B cell (primary cell): ENCODE measurements at regions of chr11 and their contacts with region 1.

Region 1: GRCh38 chr11:126303623-126304456 is at the start of gene DCPS:
- DNase-seq: peak; percentile 89
- ATAC-seq: peak; percentile 98
- H3K4me3 ChIP-seq: peak within 1 kb of the TSS; percentile 60 to 99 (median 97)
- H3K4me3 Mint-ChIP-seq: peak within 1 kb of the TSS; percentile 88
- H3K27ac ChIP-seq: peak within 1 kb of the TSS; percentile 82 to 90
- H3K27ac Mint-ChIP-seq: peak within 1 kb of the TSS; percentile 94
- H3K4me1 ChIP-seq: peaks cover 11 to 33% of the 10 kb centered on the region in 2 donors
- H3K4me1 Mint-ChIP-seq: peaks cover 35% of the 10 kb centered on the region
- H3K27me3 ChIP-seq: no peaks in the 10 kb centered on the region
- H3K27me3 Mint-ChIP-seq: no peaks in the 10 kb centered on the region
- CTCF ChIP-seq: no peak
- total RNA-seq, gene DCPS: 21.7 and 24.5 TPM in 2 replicates

Region 2: GRCh38 chr11:126282736-126283591 is 20.9 kb before region 1 on chr11 and contains the start of gene TIRAP:
- CTCF ChIA-PET with region 1: interaction called, 3 read pairs
- POLR2A ChIA-PET with region 1: interaction called, 12 read pairs
- intact Hi-C with region 1: loop called (anchors 1 kb)
- DNase-seq: peak; percentile 77
- ATAC-seq: peak; percentile 77
- H3K4me3 ChIP-seq: peak within 1 kb of the TSS; percentile 56 to 87 (median 73)
- H3K4me3 Mint-ChIP-seq: peak within 1 kb of the TSS; percentile 100
- H3K27ac ChIP-seq: peak within 1 kb of the TSS; percentile 69 to 86
- H3K27ac Mint-ChIP-seq: peak within 1 kb of the TSS; percentile 95
- H3K4me1 ChIP-seq: peaks cover 17 to 31% of the 10 kb centered on the region in 2 donors
- H3K4me1 Mint-ChIP-seq: peaks cover 44% of the 10 kb centered on the region
- H3K27me3 ChIP-seq: no peaks in the 10 kb centered on the region
- H3K27me3 Mint-ChIP-seq: no peaks in the 10 kb centered on the region
- CTCF ChIP-seq: no peak
- total RNA-seq, gene TIRAP: 25.1 and 27.1 TPM in 2 replicates

Region 3: DNA sequence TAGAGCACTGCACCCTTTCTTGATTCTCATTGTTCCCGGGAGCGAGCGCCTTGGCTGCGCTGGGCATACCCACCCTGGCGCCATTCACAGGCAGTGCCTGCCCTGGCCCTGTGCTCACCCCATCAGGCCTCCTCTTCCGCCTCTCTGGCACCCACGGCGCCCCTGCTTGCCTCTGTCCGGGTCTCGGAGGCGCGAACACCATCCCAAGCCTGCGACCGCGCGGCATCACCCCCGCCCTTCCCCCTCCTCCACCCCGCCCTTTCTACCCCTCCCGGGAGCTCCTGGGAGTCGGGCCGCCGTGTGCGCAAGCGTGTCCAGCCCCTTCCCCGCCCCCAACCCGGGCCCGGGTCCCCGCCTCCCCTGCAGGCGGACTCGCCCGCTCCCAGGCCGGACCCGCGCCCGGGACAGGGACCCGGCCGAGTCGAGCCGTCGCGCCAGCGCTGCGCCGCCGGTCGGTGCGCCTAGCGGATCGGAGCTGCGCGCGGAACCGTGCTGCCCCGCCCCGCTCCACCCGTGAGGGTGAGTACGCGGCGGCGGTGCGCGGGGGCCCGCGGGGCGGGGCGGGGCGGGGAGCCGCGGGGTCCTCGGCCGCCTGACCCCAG is 51.6 kb after region 1 on chr11 and contains the start of gene ST3GAL4:
- CTCF ChIA-PET with region 1: no interaction called
- POLR2A ChIA-PET with region 1: no interaction called
- intact Hi-C with region 1: loop called (anchors 10 kb)
- DNase-seq: peak; percentile 40
- ATAC-seq: peak; percentile 69
- H3K4me3 ChIP-seq: peak within 1 kb of the TSS; percentile 31 to 62 (median 53)
- H3K4me3 Mint-ChIP-seq: peak within 1 kb of the TSS; percentile 85
- H3K27ac ChIP-seq: no peak within 1 kb of the TSS
- H3K27ac Mint-ChIP-seq: no peak within 1 kb of the TSS
- H3K4me1 ChIP-seq: peaks cover 11 to 17% of the 10 kb centered on the region in 2 donors
- H3K4me1 Mint-ChIP-seq: peaks cover 15% of the 10 kb centered on the region
- H3K27me3 ChIP-seq: peaks cover 0 to 8% (median 0%) of the 10 kb centered on the region in 4 experiments
- H3K27me3 Mint-ChIP-seq: no peaks in the 10 kb centered on the region
- CTCF ChIP-seq: no peak
- total RNA-seq, gene ST3GAL4: 1.9 TPM in 2 replicates